Posterior vena cava (tissue), 2 donors: ENCODE measurements at regions of chr1 and their contacts with region 1.

Region 1: DNA sequence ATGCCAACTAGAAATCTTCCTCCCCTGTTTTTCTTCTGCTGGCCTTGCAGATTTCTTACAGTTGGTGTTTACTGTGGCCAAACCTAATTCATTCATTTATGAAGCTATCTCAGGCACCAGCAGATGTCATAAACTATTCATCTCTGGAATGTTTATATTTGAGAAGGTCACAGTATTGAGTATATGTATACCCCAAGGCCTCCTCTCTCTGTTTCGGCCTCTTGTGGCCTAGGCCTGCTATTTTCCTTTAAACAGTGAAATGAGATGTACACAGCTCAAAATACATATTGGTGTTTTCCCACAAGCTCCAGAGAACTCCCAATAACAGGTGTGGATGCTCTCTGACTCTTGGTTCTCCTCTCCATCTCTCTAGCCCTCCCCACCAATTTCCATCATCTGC is 520.7 kb upstream of the CAMK1G start:
- DNase-seq: no peak

Region 2: GRCh38 chr1:208988811-208989222 is 74.0 kb before region 1 on chr1:
- intact Hi-C with region 1: no loop called
- DNase-seq: no peak

Region 3: GRCh38 chr1:210653771-210654170 is 1590.9 kb after region 1 on chr1:
- intact Hi-C with region 1: loop called in 1 of 2 experiments (anchors 10 kb)
- DNase-seq: no peak